ENCODE measurements at regions of chr21 and their contacts with region 1.

Region 1: GRCh38 chr21:31098576-31099005 is 60.3 kb upstream of the KRTAP19-8 start:
- DNase-seq: peak; percentile 63 to 69
- ATAC-seq: peak in 3 of 4 donors; percentile 43 to 63 (median 62)
- H3K4me3 ChIP-seq: no peak overlapping the region
- H3K27ac ChIP-seq: no peak overlapping the region
- H3K4me1 ChIP-seq: no peaks in the 10 kb centered on the region
- H3K27me3 ChIP-seq: peaks cover 0 to 6% (median 0%) of the 10 kb centered on the region in 3 donors
- CTCF ChIP-seq: peak; percentile 60

Region 2: DNA sequence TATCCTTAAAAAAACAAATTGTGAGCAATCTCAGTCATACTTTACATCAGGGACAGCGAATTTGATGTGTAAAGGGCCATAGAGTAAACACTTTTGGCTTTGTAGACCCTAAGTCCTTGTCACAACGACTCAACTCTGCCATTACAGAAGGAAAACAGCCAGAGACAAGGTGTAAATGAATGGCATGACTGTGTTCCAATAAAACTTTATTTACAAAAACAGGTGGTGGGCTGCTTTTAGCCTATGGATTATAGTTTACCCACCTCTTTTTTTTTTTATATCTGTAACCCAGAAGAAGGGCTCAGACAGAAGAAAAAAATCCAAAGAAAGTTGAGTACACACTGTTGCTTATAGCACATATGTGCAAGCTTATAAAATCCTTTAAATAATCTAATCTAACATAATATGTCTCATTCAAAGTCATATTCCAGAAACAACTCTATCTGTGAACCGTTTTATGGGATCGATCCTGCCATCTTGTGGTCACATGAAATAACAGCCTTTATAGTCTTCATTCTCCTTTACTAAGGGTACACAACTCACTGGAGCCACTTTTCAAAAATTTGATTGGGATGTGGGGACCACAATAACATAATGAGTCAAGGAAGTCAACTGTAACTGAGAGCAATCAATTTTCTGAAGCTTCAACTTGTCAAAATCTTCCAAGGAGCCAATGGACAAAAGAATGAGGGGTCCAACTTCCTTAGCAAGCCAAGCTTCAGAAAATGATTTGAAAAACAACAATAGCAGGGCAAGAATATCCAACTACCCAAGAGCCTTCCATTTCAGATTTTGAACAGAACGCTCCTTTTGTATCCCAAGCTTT is 81.9 kb after region 1 on chr21:
- intact Hi-C with region 1: loop called in 1 of 2 experiments (anchors 5 kb)
- DNase-seq: no peak
- ATAC-seq: no peak
- H3K4me3 ChIP-seq: no peak overlapping the region
- H3K27ac ChIP-seq: no peak overlapping the region
- H3K4me1 ChIP-seq: no peaks in the 10 kb centered on the region
- H3K27me3 ChIP-seq: no peaks in the 10 kb centered on the region
- CTCF ChIP-seq: peak; percentile 24

Region 3: DNA sequence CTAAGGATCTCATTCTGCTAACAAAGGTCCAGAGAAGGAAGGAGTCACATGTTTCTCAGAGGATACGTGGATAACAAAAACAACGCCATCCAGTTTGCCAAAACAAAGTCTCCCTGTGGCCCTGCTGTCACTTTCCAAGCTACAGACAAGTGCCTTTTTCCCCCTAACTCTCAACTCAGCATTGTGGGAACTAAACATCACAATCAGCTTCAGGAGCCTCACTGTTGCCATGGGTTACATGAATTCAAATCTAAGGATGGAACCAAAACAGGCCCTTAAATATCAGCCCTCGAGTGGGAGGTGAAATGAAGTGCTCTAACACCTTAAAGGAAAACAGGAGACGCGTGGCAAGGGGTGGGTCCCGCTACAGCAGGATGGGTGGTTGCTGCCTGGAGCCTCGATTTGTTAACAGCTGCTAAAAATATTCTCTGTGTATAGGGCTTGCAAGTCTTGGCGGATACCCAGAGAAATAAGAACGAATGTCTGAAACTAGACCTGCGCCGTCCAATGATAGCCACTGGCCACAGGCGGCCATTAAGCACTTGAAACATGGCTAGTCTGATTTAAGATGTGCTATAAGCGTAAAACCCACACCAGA is 494.5 kb after region 1 on chr21:
- intact Hi-C with region 1: loop called in 1 of 2 experiments (anchors 10 kb)
- DNase-seq: no peak
- ATAC-seq: no peak
- H3K4me3 ChIP-seq: no peak overlapping the region
- H3K27ac ChIP-seq: no peak overlapping the region
- H3K4me1 ChIP-seq: no peaks in the 10 kb centered on the region
- H3K27me3 ChIP-seq: no peaks in the 10 kb centered on the region
- CTCF ChIP-seq: no peak

Region 4: DNA sequence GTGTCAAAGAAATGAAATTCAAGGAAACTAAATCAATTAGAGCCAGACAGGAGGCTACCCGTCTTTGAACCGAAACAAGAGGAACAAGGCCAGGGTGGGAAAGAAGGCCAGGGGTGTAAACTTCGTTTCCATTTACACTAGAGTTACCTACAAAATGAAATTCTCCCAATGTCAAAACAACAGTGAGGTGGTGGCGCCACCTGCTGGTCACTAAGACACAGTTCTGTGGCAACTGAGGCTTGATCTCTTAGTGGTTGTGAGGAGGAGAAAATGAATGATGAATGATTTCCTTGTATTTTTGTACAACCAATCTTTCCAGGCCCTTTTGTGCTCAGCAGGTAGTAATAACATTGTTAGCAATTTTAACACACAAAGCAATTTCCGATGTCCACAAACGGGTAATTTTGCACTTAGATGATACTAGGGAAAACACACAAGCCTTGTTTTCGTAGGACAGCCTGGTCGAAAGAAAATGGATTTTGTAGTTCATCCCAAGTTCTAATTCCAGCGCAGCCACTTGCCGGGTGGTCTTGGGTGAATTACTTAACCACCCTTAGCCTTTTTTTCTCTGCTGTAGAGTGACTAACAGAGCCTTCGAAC is 506.1 kb after region 1 on chr21:
- intact Hi-C with region 1: loop called (anchors 5 to 10 kb)
- DNase-seq: peak; percentile 38 to 79
- ATAC-seq: peak in 2 of 4 donors; percentile 47 to 53
- H3K4me3 ChIP-seq: no peak overlapping the region
- H3K27ac ChIP-seq: no peak overlapping the region
- H3K4me1 ChIP-seq: no peaks in the 10 kb centered on the region
- H3K27me3 ChIP-seq: no peaks in the 10 kb centered on the region
- CTCF ChIP-seq: peak; percentile 82

Measured in psoas muscle (tissue), 8 donors.